T-cell (primary cell): ENCODE measurements at regions of chr5 and their contacts with region 1.

Region 1: GRCh38 chr5:138095100-138095907 is 11.5 kb downstream of the WNT8A start:
- DNase-seq: no peak
- ATAC-seq: no peak
- H3K4me3 ChIP-seq: no peak overlapping the region
- H3K4me3 Mint-ChIP-seq: no peak overlapping the region
- H3K27ac ChIP-seq: no peak overlapping the region
- H3K27ac Mint-ChIP-seq: peak overlapping the region in 1 of 2 donors; percentile 64
- H3K4me1 ChIP-seq: peaks cover 8 to 47% of the 10 kb centered on the region in 2 experiments
- H3K4me1 Mint-ChIP-seq: peaks cover 34 to 56% (median 36%) of the 10 kb centered on the region in 3 donors
- H3K27me3 ChIP-seq: peaks cover 0 to 12% of the 10 kb centered on the region in 2 experiments
- H3K27me3 Mint-ChIP-seq: peaks cover 3 to 11% of the 10 kb centered on the region in 2 donors

Region 2: DNA sequence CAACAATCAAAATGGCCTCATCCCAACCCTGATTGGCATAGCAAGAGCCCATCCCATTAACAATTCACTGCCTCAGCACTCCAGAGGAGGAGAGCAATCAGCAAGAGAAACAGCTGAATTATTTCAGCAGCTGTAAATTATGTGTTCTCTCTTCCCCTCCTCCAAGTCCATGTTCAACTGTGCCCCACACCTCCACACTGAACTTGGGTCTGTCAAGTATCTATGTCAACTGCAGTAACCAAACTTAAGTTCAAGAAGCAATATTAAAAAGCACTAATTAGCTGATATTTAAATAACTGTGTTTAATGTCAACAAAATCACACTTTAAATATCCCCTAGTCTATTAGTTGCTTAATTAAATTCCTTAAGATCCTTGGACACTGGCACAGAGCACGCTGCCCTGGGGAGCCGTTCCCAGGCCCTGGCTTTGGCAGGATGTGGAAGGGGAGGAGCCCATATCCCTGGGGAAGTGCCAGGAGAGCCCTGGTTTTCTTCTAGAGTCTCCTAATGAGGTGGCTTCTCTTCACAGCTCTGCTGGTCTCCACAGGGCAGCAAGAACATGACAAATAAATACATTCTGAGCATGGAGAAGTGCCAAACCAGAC is 1052.3 kb after region 1 on chr5:
- CTCF ChIA-PET with region 1: no interaction called
- POLR2A ChIA-PET with region 1: interaction called in 1 of 2 experiments, 13 read pairs
- DNase-seq: no peak
- ATAC-seq: no peak
- H3K4me3 ChIP-seq: no peak overlapping the region
- H3K4me3 Mint-ChIP-seq: no peak overlapping the region
- H3K27ac ChIP-seq: no peak overlapping the region
- H3K27ac Mint-ChIP-seq: no peak overlapping the region
- H3K4me1 ChIP-seq: no peaks in the 10 kb centered on the region
- H3K4me1 Mint-ChIP-seq: peaks cover 4 to 11% (median 9%) of the 10 kb centered on the region in 3 donors
- H3K27me3 ChIP-seq: no peaks in the 10 kb centered on the region
- H3K27me3 Mint-ChIP-seq: no peaks in the 10 kb centered on the region